ENCODE measurements at regions of chr19 and their contacts with region 1.

Region 1: DNA sequence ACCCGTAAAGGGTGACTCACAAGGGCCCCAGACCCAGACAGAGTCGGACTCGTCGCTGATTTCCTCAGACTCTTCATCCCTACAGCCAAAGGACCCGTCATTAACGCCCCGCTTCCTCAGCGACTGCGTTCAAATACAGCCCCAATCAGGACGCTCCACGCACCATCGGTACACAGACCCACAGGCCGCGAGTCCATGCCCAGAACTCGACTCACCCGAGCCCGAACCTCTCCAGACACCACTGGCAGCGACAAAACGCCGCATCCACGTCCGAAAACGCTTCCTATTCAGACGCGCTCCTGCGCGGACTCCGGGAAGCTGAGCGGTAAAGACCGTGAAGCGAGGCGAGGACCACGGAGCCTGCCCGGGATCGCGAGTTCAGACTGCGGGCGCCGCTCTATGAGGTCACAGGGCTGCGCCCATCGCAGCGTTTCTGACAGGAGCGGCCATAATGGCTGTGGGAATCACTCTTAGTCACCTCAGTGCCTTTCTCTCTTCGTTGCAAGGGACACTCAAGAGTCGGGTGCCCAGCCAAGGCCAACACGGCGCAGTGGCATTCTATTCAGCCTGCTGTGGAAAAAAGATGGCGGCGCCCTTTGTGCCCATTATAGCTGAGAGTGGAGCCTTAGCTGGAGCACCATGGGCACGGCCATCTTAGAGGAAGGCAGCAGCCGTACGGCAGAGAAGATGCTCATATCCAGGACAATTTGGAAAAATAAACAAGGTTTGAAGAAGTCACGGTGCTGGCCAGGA is at the start of gene ZNF614:
- DNase-seq: peak; percentile 80 to 95 (median 89)
- ATAC-seq: peak; percentile 93
- H3K4me3 ChIP-seq: peak within 1 kb of the TSS; percentile 89
- H3K4me3 Mint-ChIP-seq: peak within 1 kb of the TSS; percentile 89 to 99 (median 96)
- H3K27ac ChIP-seq: peak within 1 kb of the TSS; percentile 90
- H3K27ac Mint-ChIP-seq: peak within 1 kb of the TSS; percentile 91 to 99 (median 96)
- H3K4me1 ChIP-seq: peaks cover 12 to 16% of the 10 kb centered on the region in 2 donors
- H3K4me1 Mint-ChIP-seq: peaks cover 6 to 35% (median 31%) of the 10 kb centered on the region in 7 donors
- H3K27me3 ChIP-seq: no peaks in the 10 kb centered on the region
- H3K27me3 Mint-ChIP-seq: no peaks in the 10 kb centered on the region
- total RNA-seq, gene ZNF614: 5.0 to 14.1 (median 11.1) TPM

Region 2: DNA sequence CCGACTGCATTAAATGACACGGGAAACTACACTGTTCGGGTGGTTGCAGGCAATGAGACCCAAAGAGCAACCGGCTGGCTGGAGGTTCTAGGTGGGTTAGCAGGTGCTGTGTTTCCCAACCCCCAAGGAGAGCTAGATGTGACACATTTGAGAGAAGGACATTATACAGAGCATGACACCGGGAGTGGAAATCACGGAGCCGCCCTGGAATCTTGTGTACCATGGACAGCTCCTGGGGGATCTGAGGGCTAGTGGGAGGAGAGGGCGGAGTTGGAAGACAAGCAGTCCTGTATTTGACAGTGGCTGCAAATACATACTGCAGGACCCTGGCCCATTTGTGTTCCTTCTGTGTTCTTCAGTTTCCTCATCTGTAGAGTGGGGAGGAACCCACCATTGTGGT is 547.6 kb before region 1 on chr19:
- CTCF ChIA-PET with region 1: no interaction called
- POLR2A ChIA-PET with region 1: no interaction called
- intact Hi-C with region 1: no loop called
- DNase-seq: no peak
- ATAC-seq: no peak
- H3K4me3 ChIP-seq: no peak overlapping the region
- H3K4me3 Mint-ChIP-seq: no peak overlapping the region
- H3K27ac ChIP-seq: no peak overlapping the region
- H3K27ac Mint-ChIP-seq: peak overlapping the region in 1 of 9 donors; percentile 52
- H3K4me1 ChIP-seq: no peaks in the 10 kb centered on the region
- H3K4me1 Mint-ChIP-seq: peaks cover 0 to 5% (median 0%) of the 10 kb centered on the region in 7 donors
- H3K27me3 ChIP-seq: no peaks in the 10 kb centered on the region
- H3K27me3 Mint-ChIP-seq: peaks cover 11 to 53% (median 43%) of the 10 kb centered on the region in 5 donors

Region 3: DNA sequence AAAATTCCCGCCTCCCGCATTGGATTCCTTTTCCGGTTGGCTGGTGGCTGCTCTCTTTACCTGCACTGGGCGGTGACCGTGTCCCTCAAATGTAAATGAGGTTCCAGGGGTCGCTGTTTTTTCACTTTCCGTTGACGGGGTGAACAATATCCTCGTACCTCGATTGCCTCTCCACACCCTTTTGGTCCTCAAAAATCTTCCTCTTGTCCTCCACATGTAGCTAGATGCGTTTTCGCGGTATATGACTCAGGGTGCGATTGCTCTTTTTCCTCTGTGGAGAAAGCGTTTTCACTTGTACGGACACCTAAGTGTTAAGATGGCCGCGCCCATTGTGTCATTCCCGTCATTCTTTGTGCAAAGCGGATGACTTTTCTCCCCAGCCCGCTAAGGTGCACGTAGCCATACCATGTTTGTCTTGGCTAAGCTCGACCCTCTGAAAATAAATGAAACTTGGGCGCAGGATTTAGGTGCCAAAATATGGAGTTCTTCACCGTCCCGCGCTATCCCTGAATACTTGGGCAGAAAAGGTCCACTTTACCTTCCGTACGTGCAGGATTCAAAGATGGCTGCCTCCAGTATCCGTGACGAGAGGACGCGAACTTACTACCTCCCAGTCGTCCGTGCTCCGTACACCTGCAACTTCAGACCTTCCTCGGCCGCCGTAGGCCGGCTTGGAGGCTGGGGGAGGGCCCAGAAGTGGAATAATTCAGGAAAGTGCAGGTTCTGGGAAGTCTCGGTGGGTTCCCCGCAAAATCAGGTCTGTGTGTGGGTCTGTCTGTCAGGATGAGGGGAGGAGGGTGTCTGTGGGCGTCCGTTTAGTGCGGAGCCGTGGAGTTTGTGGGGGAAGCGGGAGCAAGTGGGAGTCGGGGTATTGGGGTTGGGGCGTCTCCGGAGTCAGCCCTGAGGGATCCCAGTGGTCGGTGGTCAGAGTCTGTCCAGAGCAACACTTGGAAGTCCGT is 101.1 kb before region 1 on chr19 and contains the start of gene ZNF613:
- CTCF ChIA-PET with region 1: no interaction called
- POLR2A ChIA-PET with region 1: no interaction called
- intact Hi-C with region 1: loop called (anchors 1 kb)
- DNase-seq: peak; percentile 65 to 87 (median 83)
- ATAC-seq: peak; percentile 92
- H3K4me3 ChIP-seq: peak within 1 kb of the TSS; percentile 70
- H3K4me3 Mint-ChIP-seq: peak within 1 kb of the TSS; percentile 90 to 100 (median 97)
- H3K27ac ChIP-seq: peak within 1 kb of the TSS; percentile 77
- H3K27ac Mint-ChIP-seq: peak within 1 kb of the TSS; percentile 87 to 96 (median 92)
- H3K4me1 ChIP-seq: peaks cover 4% of the 10 kb centered on the region in 2 donors
- H3K4me1 Mint-ChIP-seq: peaks cover 19 to 41% (median 36%) of the 10 kb centered on the region in 7 donors
- H3K27me3 ChIP-seq: no peaks in the 10 kb centered on the region
- H3K27me3 Mint-ChIP-seq: no peaks in the 10 kb centered on the region
- total RNA-seq, gene ZNF613: 1.5 to 9.6 (median 5.2) TPM

Region 4: GRCh38 chr19:52007806-52008557 is 20.2 kb before region 1 on chr19 and contains the start of gene ZNF615:
- CTCF ChIA-PET with region 1: no interaction called
- POLR2A ChIA-PET with region 1: interaction called, 13 read pairs
- intact Hi-C with region 1: loop called (anchors 1 kb)
- DNase-seq: peak; percentile 80 to 96 (median 85)
- ATAC-seq: peak; percentile 97
- H3K4me3 ChIP-seq: peak within 1 kb of the TSS; percentile 89
- H3K4me3 Mint-ChIP-seq: peak within 1 kb of the TSS; percentile 92 to 98 (median 98)
- H3K27ac ChIP-seq: peak within 1 kb of the TSS; percentile 83
- H3K27ac Mint-ChIP-seq: peak within 1 kb of the TSS; percentile 91 to 99 (median 95)
- H3K4me1 ChIP-seq: peaks cover 7% of the 10 kb centered on the region in 2 donors
- H3K4me1 Mint-ChIP-seq: peaks cover 15 to 33% (median 21%) of the 10 kb centered on the region in 7 donors
- H3K27me3 ChIP-seq: no peaks in the 10 kb centered on the region
- H3K27me3 Mint-ChIP-seq: no peaks in the 10 kb centered on the region
- total RNA-seq, gene ZNF615: 8.7 to 20.9 (median 11.0) TPM

Region 5: GRCh38 chr19:52148256-52148655 is 120.1 kb after region 1 on chr19:
- CTCF ChIA-PET with region 1: no interaction called
- POLR2A ChIA-PET with region 1: no interaction called
- intact Hi-C with region 1: no loop called
- DNase-seq: no peak
- ATAC-seq: no peak
- H3K4me3 ChIP-seq: no peak overlapping the region
- H3K4me3 Mint-ChIP-seq: no peak overlapping the region
- H3K27ac ChIP-seq: no peak overlapping the region
- H3K27ac Mint-ChIP-seq: no peak overlapping the region
- H3K4me1 ChIP-seq: no peaks in the 10 kb centered on the region
- H3K4me1 Mint-ChIP-seq: peaks cover 0 to 1% (median 0%) of the 10 kb centered on the region in 7 donors
- H3K27me3 ChIP-seq: no peaks in the 10 kb centered on the region
- H3K27me3 Mint-ChIP-seq: no peaks in the 10 kb centered on the region

Region 6: DNA sequence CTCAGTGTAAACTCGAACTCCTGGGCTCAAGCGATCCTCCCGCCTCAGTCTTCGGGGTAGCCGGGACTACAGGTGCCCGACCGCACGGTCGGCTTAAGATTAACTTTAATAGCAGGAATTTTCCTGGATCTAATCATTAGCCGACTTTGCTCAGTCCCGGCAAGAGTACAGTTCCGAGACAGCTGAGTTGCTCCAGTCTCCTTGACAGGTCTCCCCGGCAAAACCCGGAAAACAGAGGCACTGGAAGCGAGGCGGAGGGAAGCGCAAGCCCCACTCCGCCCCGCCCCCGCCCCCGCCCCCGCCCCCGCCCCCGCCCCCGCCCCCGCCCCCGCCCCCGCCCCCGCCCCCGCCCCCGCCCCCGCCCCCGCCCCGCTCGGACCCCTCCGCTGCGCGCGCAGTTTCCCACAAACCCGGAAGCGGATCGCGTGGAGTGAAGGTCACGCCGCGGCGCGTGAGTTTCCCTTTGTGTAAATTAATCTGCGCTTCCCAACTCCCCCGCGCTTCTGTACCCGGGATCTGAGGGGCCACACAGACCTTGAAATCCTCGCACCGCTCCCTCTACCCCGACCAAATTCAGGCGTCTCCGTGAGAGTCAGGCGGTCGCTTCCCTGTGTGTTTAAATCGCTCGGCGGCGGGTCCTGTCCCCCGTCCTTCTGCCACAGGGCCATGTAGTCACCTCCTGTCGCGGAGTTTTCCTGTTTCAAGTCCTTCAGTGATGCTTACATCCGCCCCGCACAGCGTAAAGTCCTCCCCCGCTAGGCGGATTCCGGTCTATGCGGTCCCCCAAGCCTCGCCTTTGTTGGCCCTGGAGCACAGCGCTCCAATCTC is 268.8 kb after region 1 on chr19 and contains the start of gene ZNF480:
- CTCF ChIA-PET with region 1: no interaction called
- POLR2A ChIA-PET with region 1: no interaction called
- intact Hi-C with region 1: loop called in 1 of 2 experiments (anchors 1 kb)
- DNase-seq: peak; percentile 67 to 91 (median 87)
- ATAC-seq: peak; percentile 89
- H3K4me3 ChIP-seq: peak within 1 kb of the TSS; percentile 85
- H3K4me3 Mint-ChIP-seq: peak within 1 kb of the TSS; percentile 89 to 99 (median 98)
- H3K27ac ChIP-seq: peak within 1 kb of the TSS; percentile 97
- H3K27ac Mint-ChIP-seq: peak within 1 kb of the TSS; percentile 95 to 99 (median 98)
- H3K4me1 ChIP-seq: peaks cover 4 to 5% of the 10 kb centered on the region in 2 donors
- H3K4me1 Mint-ChIP-seq: peaks cover 15 to 32% (median 19%) of the 10 kb centered on the region in 7 donors
- H3K27me3 ChIP-seq: no peaks in the 10 kb centered on the region
- H3K27me3 Mint-ChIP-seq: peaks cover 0 to 3% (median 0%) of the 10 kb centered on the region in 5 donors
- total RNA-seq, gene ZNF480: 8.5 to 28.9 (median 13.3) TPM

Measured in naive thymus-derived CD4-positive, alpha-beta T cell (primary cell).